Activated naive CD4-positive, alpha-beta T cell treated with anti-CD3 and anti-CD28 coated beads for 36 hours (primary cell): ENCODE measurements at regions of chr3 and their contacts with region 1.

Region 1: DNA sequence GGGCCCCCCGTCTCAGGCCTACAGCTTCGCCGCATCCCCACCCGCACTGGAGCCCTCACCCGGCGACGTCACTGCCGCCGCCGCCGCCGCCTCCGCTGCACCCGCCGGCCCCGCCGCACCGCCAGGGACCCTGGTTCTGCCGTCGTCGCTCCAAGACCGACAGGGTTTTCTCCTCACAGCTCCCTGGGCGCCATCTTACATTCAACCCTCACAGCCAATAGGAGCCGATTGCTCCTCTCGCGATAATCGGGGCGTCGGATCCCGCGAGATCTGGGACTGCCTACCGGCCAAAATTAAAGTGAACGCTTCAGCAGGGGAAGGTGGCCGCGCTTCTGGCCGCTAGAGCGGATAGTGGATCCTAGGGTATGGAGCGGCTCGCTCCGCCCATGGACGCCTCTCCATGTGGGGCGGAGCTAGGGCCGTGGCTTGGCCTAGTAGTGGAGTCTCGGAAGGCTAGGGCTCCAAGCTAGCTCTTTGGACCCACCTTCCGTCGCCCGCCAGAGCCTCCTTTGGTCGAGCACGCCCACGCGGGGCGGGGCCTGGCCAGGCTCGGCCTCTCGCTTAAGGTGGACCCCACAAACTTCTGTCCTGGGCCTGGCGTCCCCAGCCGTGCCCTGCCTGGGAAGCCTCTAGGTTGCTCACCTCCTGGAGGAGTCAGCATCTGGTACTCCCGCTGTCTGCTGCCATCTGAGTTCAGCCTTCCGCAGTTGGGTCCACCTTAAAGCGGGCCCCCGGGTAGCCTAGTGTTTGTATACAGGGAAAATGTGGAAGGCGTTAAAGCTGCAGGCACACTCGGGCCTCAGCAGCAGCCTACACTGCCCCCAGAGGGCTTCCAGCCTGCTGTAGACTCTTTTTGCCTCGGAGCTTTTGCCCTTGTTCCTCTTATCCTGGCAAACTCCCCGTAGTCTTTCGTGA is at the start of gene QRICH1:
- DNase-seq: peak; percentile 99
- H3K4me3 Mint-ChIP-seq: peak within 1 kb of the TSS; percentile 94
- H3K27ac Mint-ChIP-seq: peak within 1 kb of the TSS; percentile 94
- H3K4me1 Mint-ChIP-seq: peaks cover 35% of the 10 kb centered on the region
- H3K27me3 Mint-ChIP-seq: no peaks in the 10 kb centered on the region
- total RNA-seq, gene QRICH1: 100 to 111 TPM

Region 2: GRCh38 chr3:48716982-48717746 is 376.9 kb before region 1 on chr3 and contains the start of gene IP6K2:
- CTCF ChIA-PET with region 1: no interaction called
- intact Hi-C with region 1: loop called (anchors 1 kb)
- DNase-seq: peak; percentile 99
- H3K4me3 Mint-ChIP-seq: peak within 1 kb of the TSS; percentile 97
- H3K27ac Mint-ChIP-seq: peak within 1 kb of the TSS; percentile 90
- H3K4me1 Mint-ChIP-seq: peaks cover 30% of the 10 kb centered on the region
- H3K27me3 Mint-ChIP-seq: no peaks in the 10 kb centered on the region
- total RNA-seq, gene IP6K2: 64.3 to 68.3 TPM

Region 3: DNA sequence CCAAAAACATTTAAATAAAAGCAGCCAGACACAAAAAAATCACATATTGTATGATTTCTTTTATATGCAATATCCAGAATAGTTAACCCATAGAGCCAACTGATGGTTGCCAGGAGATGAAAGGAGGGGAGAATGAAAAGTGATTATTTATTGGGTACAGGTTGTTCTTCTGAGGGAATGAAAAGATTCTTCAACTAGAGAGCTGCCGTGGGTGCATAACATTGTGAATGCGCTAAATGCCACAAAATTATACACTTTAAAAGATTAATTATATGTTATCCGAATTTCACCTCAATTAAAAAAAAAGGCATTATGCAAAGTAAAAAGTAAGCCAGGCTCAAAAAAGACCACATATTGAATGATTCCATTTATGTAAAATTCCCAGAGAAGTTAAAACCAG is 282.6 kb before region 1 on chr3:
- CTCF ChIA-PET with region 1: no interaction called
- intact Hi-C with region 1: no loop called
- DNase-seq: no peak
- H3K4me3 Mint-ChIP-seq: peak overlapping the region; percentile 38
- H3K27ac Mint-ChIP-seq: no peak overlapping the region
- H3K4me1 Mint-ChIP-seq: peaks cover 36% of the 10 kb centered on the region
- H3K27me3 Mint-ChIP-seq: no peaks in the 10 kb centered on the region

Region 4: DNA sequence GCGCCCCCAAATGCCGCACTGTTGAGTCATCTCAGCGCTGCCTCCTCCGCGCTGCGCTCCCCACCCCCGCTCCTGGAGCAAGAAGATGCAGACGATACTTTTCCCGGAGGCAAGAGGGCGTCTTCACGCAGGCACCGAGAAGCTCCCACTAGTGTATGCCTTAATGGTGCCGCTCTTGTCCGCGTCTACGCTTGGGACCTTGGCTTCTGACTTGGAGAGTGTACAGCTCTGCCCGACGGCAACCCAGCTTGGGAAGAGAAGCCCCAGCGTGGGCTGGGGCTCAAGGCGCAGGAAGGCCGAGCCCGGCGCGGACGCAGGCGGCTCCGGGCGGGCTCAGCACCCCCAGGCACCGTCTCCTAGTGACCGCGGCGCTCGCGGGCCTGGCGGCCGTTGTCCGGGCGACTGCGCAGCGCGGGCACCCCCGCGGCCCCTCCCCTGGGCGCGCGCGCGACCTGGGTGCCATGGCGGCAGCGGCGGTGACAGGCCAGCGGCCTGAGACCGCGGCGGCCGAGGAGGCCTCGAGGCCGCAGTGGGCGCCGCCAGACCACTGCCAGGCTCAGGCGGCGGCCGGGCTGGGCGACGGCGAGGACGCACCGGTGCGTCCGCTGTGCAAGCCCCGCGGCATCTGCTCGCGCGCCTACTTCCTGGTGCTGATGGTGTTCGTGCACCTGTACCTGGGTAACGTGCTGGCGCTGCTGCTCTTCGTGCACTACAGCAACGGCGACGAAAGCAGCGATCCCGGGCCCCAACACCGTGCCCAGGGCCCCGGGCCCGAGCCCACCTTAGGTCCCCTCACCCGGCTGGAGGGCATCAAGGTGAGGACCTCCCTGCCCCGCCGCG is 104.1 kb before region 1 on chr3 and contains the start of gene P4HTM:
- CTCF ChIA-PET with region 1: interaction called, 5 read pairs
- intact Hi-C with region 1: loop called (anchors 1 kb)
- DNase-seq: peak; percentile 88
- H3K4me3 Mint-ChIP-seq: peak within 1 kb of the TSS; percentile 94
- H3K27ac Mint-ChIP-seq: peak within 1 kb of the TSS; percentile 93
- H3K4me1 Mint-ChIP-seq: peaks cover 36% of the 10 kb centered on the region
- H3K27me3 Mint-ChIP-seq: no peaks in the 10 kb centered on the region
- total RNA-seq, gene P4HTM: 20.2 to 21.7 TPM

Region 5: DNA sequence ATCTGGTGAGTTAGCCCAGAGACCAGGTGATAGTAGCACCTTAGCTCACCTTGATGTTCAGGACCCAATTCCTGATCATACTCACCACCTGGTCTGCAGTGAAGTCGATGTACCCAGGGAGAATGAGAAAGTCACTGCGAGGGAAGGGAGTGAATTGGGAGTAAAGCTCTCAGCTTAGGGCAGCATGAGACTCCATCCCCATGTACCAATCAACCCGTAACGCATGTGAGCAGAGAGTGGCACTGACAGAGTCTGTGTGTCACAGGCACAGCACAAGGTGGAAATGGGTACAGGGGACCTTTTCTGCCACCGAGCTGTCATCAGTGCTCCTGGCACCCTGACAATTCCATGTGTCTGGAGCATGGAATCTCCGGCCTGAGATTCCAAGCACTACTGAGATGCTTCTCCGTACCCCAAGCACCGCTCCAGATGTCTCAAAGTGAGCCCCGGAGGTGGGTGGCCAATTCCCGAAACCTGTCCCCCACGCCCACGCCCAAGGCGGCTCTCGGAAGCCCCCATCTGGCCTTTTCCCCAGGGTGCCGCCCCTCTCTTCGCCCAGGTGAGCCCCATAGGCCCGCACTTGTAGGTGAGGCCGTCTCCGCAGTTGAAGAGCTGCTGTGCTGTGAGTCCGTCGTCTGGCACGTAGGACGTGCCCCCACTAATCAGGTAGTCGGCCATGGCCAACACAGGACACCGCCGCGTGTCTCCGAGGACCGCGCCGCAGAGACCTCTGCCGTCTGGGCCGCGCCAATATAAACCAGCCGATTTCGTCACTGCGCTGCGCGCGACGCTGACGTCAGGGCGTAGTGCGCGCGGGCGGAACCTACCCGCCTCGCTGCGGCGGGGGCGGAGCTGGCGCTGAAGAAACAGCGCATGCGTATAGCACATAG is 65.2 kb before region 1 on chr3 and contains the start of gene IMPDH2:
- CTCF ChIA-PET with region 1: interaction called, 3 read pairs
- intact Hi-C with region 1: loop called (anchors 1 kb)
- DNase-seq: peak; percentile 94
- H3K4me3 Mint-ChIP-seq: peak within 1 kb of the TSS; percentile 91
- H3K27ac Mint-ChIP-seq: peak within 1 kb of the TSS; percentile 89
- H3K4me1 Mint-ChIP-seq: peaks cover 53% of the 10 kb centered on the region
- H3K27me3 Mint-ChIP-seq: no peaks in the 10 kb centered on the region
- total RNA-seq, gene IMPDH2: 565 to 593 TPM

Region 6: GRCh38 chr3:49120438-49121131 is 26.5 kb after region 1 on chr3 and contains the start of gene USP19:
- CTCF ChIA-PET with region 1: interaction called, 4 read pairs
- intact Hi-C with region 1: loop called (anchors 1 kb)
- DNase-seq: peak; percentile 96
- H3K4me3 Mint-ChIP-seq: peak within 1 kb of the TSS; percentile 86
- H3K27ac Mint-ChIP-seq: peak within 1 kb of the TSS; percentile 84
- H3K4me1 Mint-ChIP-seq: peaks cover 20% of the 10 kb centered on the region
- H3K27me3 Mint-ChIP-seq: no peaks in the 10 kb centered on the region
- total RNA-seq, gene USP19: 44.3 to 46.5 TPM

Region 7: GRCh38 chr3:49339945-49340800 is 246.1 kb after region 1 on chr3 and contains the start of gene USP4:
- CTCF ChIA-PET with region 1: no interaction called
- intact Hi-C with region 1: loop called (anchors 2 kb)
- DNase-seq: peak; percentile 96
- H3K4me3 Mint-ChIP-seq: peak within 1 kb of the TSS; percentile 91
- H3K27ac Mint-ChIP-seq: peak within 1 kb of the TSS; percentile 100
- H3K4me1 Mint-ChIP-seq: peaks cover 44% of the 10 kb centered on the region
- H3K27me3 Mint-ChIP-seq: no peaks in the 10 kb centered on the region
- total RNA-seq, gene USP4: 68.0 to 69.7 TPM

Region 8: DNA sequence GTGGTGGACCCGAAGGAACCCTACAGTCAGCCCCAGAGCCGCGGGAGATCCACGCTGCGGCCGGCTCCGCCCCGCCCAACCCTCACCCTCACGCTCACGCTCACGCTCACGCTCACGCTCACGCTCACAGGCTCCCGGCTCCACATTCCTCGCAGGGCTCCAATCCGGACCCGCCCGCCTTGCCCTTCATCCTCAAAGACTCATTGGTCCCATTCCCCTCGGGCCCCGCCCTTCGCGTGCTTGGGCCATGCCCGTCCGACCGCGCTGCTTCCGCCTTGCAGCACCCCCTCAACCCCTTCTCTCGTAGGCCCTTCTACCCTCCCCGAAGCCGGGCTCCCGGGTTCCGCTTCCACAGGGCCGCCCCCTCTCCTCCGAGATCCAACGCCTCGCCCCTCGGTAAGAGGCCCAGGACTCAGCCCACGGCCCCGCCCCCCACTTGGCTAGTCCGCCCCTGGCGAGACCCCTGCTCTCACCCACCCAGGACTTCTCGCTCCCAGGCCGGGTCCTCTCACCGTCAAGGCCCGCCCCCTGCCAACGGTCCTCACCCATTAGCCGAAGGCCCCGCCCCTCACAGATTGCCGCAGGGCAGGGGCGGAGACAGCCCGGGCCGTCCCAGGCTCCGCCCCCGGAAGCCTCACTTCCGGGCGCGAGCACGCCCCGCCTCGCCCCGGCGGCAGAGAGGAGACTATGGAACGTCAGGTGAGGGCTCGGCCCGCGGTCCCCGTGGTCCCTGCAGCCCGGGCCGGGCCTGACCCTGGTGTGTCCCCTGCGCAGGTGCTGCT is 579.8 kb after region 1 on chr3 and contains the start of gene APEH:
- CTCF ChIA-PET with region 1: no interaction called
- intact Hi-C with region 1: loop called (anchors 5 kb)
- DNase-seq: peak; percentile 99
- H3K4me3 Mint-ChIP-seq: peak within 1 kb of the TSS; percentile 94
- H3K27ac Mint-ChIP-seq: peak within 1 kb of the TSS; percentile 96
- H3K4me1 Mint-ChIP-seq: peaks cover 36% of the 10 kb centered on the region
- H3K27me3 Mint-ChIP-seq: no peaks in the 10 kb centered on the region
- total RNA-seq, gene APEH: 120 to 122 TPM

Region 9: GRCh38 chr3:50337191-50337841 is 1243.2 kb after region 1 on chr3:
- CTCF ChIA-PET with region 1: no interaction called
- intact Hi-C with region 1: no loop called
- DNase-seq: peak; percentile 99
- H3K4me3 Mint-ChIP-seq: peak overlapping the region; percentile 94
- H3K27ac Mint-ChIP-seq: peak overlapping the region; percentile 94
- H3K4me1 Mint-ChIP-seq: peaks cover 57% of the 10 kb centered on the region
- H3K27me3 Mint-ChIP-seq: no peaks in the 10 kb centered on the region